Activated B cell treated with CpG ODN at 0.5 μM for 24 hours (primary cell): ENCODE measurements at regions of chr6 and their contacts with region 1.

Region 1: DNA sequence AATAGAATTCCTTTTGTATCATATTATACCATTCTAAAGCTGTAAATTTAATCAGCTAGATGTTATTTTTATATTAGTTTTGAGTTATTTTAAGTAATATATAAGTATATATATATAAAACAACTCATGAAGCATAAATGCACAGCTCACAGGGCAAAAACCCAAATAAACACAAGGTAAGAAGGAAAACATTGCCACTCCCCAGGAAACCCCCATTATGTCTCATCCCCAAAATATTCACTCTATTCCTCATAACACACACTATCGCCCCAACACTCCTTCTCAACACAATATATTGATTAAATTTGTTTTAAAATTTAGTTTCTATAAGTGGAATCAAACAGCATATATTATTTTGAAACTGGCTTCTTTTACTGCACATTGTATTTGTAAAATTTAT is 98.6 kb upstream of the FAM83B start:
- DNase-seq: no peak
- ATAC-seq: no peak
- H3K4me3 Mint-ChIP-seq: no peak overlapping the region
- H3K27ac Mint-ChIP-seq: no peak overlapping the region
- H3K4me1 Mint-ChIP-seq: no peaks in the 10 kb centered on the region
- H3K27me3 Mint-ChIP-seq: no peaks in the 10 kb centered on the region
- CTCF ChIP-seq: no peak

Region 2: GRCh38 chr6:54737247-54737646 is 10.7 kb before region 1 on chr6:
- CTCF ChIA-PET with region 1: no interaction called
- POLR2A ChIA-PET with region 1: interaction called, 12 read pairs
- intact Hi-C with region 1: no loop called
- DNase-seq: no peak
- ATAC-seq: no peak
- H3K4me3 Mint-ChIP-seq: no peak overlapping the region
- H3K27ac Mint-ChIP-seq: no peak overlapping the region
- H3K4me1 Mint-ChIP-seq: no peaks in the 10 kb centered on the region
- H3K27me3 Mint-ChIP-seq: no peaks in the 10 kb centered on the region
- CTCF ChIP-seq: no peak